Mammary epithelial cell (primary cell): ENCODE measurements at regions of chr11 and their contacts with region 1.

Region 1: DNA sequence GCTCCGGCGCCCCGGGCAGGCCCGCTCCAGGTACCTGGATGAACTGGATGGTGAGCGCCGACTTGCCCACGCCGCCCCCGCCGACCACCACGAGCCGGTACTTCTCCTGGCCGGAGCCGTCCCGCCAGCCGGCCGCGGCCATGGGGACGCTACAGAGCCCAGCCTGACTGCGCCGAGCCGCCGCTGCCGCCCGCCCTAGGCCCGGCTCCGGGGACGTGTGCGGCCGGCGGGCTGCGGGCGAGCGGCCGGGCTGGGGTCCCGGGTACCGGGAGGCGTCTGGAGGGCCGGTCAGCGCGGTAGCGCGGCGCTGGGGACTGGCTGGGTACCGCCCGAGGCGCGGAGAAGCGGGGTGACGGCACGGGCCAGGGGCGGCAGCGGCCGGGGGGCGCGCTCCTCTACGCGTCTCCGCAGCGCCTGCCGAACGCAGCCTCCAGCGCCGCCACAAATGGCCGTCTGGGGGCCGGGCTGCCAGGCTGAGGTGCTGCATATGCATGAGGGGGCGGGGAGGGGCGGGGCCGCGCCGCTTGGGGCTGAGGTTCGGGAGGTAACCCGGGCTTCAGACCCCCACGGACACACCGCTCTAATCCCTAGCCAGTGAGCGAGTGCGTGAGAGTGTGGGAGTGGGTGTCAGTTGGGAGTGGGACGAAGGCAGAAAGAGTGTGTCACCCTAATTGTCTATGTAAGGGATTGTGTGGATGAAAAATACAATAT is at the start of gene RRAS2:
- DNase-seq: peak; percentile 69
- H3K4me3 ChIP-seq: peak within 1 kb of the TSS; percentile 84 to 92 (median 88)
- H3K27ac ChIP-seq: peak within 1 kb of the TSS; percentile 88
- H3K4me1 ChIP-seq: peaks cover 5% of the 10 kb centered on the region
- H3K27me3 ChIP-seq: no peaks in the 10 kb centered on the region
- CTCF ChIP-seq: no peak
- total RNA-seq, gene RRAS2: 125 to 141 TPM

Region 2: DNA sequence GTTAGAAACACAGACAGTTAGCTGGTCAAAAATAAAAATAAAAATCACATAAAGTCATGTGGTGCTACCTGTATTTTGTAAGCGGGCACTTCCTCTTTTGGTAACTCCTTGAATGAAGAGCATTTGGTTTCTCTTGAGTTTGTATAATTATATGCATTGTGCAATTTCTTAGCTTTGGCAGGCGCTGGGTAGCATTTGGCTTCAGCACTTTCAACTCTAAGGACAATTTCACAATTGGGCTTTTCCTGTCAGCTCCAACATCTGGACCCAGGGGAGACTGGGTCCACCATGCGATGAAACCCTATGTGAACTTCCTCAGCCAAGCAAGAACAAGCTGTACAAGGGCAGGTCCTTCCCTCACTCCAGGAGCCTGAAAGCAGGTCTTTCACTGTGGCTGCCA is 169.0 kb before region 1 on chr11:
- CTCF ChIA-PET with region 1: no interaction called
- dilution Hi-C with region 1: no loop called
- in situ Hi-C with region 1: no loop called
- intact Hi-C with region 1: no loop called
- DNase-seq: no peak
- H3K4me3 ChIP-seq: no peak overlapping the region
- H3K27ac ChIP-seq: no peak overlapping the region
- H3K4me1 ChIP-seq: no peaks in the 10 kb centered on the region
- H3K27me3 ChIP-seq: peaks cover 4% of the 10 kb centered on the region
- CTCF ChIP-seq: no peak

Region 3: GRCh38 chr11:14336507-14337503 is 22.1 kb before region 1 on chr11:
- CTCF ChIA-PET with region 1: no interaction called
- dilution Hi-C with region 1: no loop called
- in situ Hi-C with region 1: no loop called
- intact Hi-C with region 1: loop called (anchors 1 kb)
- DNase-seq: peak; percentile 100
- H3K4me3 ChIP-seq: peak overlapping the region; percentile 37 to 46 (median 45)
- H3K27ac ChIP-seq: peak overlapping the region; percentile 98
- H3K4me1 ChIP-seq: peaks cover 31% of the 10 kb centered on the region
- H3K27me3 ChIP-seq: no peaks in the 10 kb centered on the region
- CTCF ChIP-seq: no peak

Region 4: GRCh38 chr11:14380947-14381561 is 22.2 kb after region 1 on chr11:
- CTCF ChIA-PET with region 1: no interaction called
- dilution Hi-C with region 1: no loop called
- in situ Hi-C with region 1: no loop called
- intact Hi-C with region 1: loop called (anchors 2 kb)
- DNase-seq: peak; percentile 68
- H3K4me3 ChIP-seq: peak overlapping the region; percentile 38 to 50 (median 46)
- H3K27ac ChIP-seq: peak overlapping the region; percentile 36
- H3K4me1 ChIP-seq: peaks cover 35% of the 10 kb centered on the region
- H3K27me3 ChIP-seq: no peaks in the 10 kb centered on the region
- CTCF ChIP-seq: no peak